GM10248 (cell line): ENCODE measurements at regions of chr6 and their contacts with region 1.

Region 1: GRCh38 chr6:14066782-14067406 is 50.7 kb upstream of the CD83 start:
- DNase-seq: peak; percentile 73
- CTCF ChIP-seq: peak; percentile 56

Region 2: GRCh38 chr6:13574149-13574570 is 492.7 kb before region 1 on chr6:
- CTCF ChIA-PET with region 1: interaction called, 20 read pairs
- POLR2A ChIA-PET with region 1: no interaction called
- DNase-seq: peak; percentile 97
- CTCF ChIP-seq: peak; percentile 61

Region 3: DNA sequence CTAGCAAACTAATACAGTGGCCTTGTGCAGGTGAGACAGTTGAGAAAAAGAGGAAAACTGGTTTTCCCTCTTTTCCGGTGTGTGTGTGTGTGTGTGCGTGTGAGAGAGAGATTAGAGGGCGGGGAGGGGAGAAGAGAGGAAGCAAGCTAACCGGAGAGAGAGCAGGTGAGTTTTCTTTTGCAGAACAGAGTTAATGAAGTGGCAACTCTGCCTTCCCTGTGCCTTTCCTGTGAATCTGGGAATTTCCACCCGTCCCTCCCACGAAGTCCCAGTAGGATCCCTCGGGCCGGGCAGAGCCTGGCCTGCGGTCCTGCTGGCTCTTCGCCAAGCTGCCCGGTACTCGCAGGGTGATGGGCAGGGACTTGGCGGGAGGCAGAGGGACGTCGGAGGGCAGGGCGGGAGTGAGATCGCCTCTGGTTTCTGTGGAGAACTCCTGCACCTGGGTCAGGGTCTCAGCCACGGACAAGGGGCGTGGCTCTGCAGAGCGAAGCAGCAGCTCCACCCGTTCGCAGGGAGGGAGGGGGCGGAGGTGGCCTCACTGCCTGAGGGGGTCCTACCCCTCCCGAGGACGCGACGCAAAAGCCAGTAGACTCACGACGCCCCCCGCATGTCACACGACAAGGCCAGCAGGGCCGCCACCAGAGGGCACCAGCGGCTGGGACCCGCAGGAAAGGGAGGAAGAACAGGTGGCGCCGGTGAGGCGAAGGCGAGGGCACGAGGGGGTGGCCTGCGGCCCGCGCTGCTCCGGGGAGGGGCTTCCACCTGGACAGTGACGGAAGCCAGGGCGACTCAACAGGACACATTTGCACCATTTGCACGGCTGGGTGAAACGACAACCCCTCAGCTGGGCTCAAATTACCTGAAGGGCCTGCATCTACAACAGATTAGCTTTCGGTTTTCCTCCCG is 193.4 kb before region 1 on chr6:
- CTCF ChIA-PET with region 1: interaction called, 20 read pairs
- POLR2A ChIA-PET with region 1: no interaction called
- DNase-seq: peak; percentile 89
- CTCF ChIP-seq: peak; percentile 94

Region 4: GRCh38 chr6:13924146-13924948 is 142.5 kb before region 1 on chr6:
- CTCF ChIA-PET with region 1: interaction called, 15 read pairs
- POLR2A ChIA-PET with region 1: no interaction called
- DNase-seq: peak; percentile 15
- CTCF ChIP-seq: no peak

Region 5: GRCh38 chr6:14046476-14047068 is 20.3 kb before region 1 on chr6:
- CTCF ChIA-PET with region 1: interaction called, 209 read pairs
- POLR2A ChIA-PET with region 1: no interaction called
- DNase-seq: peak; percentile 72
- CTCF ChIP-seq: peak; percentile 67

Region 6: DNA sequence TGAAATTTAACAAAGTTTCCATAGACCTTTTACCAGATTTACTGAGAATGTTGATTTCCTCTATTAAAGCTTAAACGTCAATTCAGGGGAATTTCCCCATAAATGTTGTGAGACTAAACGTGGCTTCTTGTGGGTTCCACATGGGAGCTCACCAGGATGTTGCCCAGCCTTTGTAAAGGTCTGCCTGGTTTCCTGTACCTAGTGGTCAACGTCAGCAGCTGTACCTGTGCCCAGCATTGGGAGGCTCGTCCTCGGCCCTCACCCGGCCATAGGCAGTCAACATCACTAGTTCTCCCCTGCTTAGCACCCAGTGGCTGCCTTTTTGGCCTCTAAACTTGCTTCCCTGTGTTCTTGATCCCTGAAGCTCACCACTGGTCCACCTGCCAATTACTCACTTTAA is 28.5 kb after region 1 on chr6:
- CTCF ChIA-PET with region 1: interaction called, 13 read pairs
- POLR2A ChIA-PET with region 1: no interaction called
- DNase-seq: peak; percentile 48
- CTCF ChIP-seq: no peak

Region 7: GRCh38 chr6:14129575-14129974 is 62.7 kb after region 1 on chr6:
- CTCF ChIA-PET with region 1: interaction called, 17 read pairs
- POLR2A ChIA-PET with region 1: no interaction called
- DNase-seq: peak; percentile 51
- CTCF ChIP-seq: peak; percentile 43

Region 8: DNA sequence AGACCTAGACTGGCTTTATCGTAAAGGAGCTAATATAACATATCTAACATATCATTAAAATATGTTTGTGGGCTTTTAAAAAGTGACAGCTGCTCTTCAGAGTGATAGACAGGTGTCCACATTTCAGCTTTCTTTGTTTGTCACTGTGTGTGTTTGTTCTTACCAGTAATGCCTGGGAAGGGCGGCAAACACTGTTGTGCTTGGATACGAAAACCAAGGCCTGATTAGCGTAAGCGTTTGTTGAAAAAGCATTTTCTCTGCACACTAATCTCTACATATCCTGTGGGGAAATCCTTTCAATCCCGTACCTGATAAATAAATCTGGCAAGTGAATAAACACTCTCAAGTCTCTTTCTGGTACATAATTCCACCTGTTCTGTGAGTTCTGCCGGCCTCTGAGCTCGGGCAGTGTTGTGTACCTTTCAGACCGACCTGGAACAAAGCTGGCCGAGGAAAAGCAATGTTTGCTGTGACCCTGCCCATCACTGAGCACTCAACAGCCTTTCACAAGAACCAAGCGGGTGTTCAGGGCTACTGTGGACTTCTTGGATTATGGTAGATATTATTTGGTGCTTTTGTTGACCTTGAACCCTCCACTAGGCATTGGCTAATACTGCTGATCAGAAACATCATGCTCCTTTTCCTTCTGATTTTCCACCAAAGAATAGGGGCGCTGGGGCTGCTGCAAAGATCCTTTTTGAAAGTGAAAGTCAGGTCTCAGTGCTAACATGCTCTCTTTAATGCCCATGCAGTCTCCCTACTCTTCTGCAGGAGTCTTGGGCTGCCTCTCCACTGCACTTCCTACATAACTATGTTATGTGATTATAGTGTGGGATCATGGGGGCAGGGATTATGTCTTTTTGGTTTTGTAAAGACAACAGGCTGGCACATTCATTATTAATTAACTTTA is 151.1 kb after region 1 on chr6:
- CTCF ChIA-PET with region 1: no interaction called
- POLR2A ChIA-PET with region 1: no interaction called
- DNase-seq: no peak
- CTCF ChIP-seq: no peak